Activated naive CD4-positive, alpha-beta T cell treated with anti-CD3 and anti-CD28 coated beads for 36 hours (primary cell): ENCODE measurements at regions of chr18 and their contacts with region 1.

Region 1: GRCh38 chr18:69935319-69936190 is 12.1 kb downstream of the CD226 start:
- DNase-seq: peak; percentile 92
- H3K4me3 Mint-ChIP-seq: no peak overlapping the region
- H3K27ac Mint-ChIP-seq: no peak overlapping the region
- H3K4me1 Mint-ChIP-seq: peaks cover 41% of the 10 kb centered on the region
- H3K27me3 Mint-ChIP-seq: no peaks in the 10 kb centered on the region

Region 2: GRCh38 chr18:68714609-68715496 is 1220.7 kb before region 1 on chr18 and contains the start of gene TMX3:
- CTCF ChIA-PET with region 1: no interaction called
- intact Hi-C with region 1: loop called (anchors 1 kb)
- DNase-seq: peak; percentile 90
- H3K4me3 Mint-ChIP-seq: peak within 1 kb of the TSS; percentile 96
- H3K27ac Mint-ChIP-seq: peak within 1 kb of the TSS; percentile 92
- H3K4me1 Mint-ChIP-seq: peaks cover 33% of the 10 kb centered on the region
- H3K27me3 Mint-ChIP-seq: no peaks in the 10 kb centered on the region
- total RNA-seq, gene TMX3: 35.5 to 41.3 TPM

Region 3: DNA sequence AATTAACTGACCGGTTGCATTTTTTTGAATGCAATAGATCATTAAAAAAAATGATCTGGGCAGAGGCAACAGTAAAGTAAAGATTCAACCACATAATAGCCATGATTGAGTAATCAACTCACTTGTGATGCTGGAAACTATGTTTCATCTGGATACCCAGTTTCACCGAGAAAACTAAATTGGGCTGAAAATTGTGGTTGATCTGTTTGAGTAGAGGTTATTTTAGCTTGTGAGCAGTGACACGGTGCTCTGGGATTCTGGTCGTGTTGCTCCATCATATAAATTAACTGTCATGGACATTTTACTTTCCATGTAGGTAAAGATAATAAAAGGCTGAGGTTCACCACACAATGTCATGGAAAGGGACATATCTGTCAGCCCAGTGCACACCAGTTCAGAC is 46.5 kb before region 1 on chr18:
- CTCF ChIA-PET with region 1: interaction called, 3 read pairs
- intact Hi-C with region 1: loop called (anchors 1 kb)
- DNase-seq: peak; percentile 38
- H3K4me3 Mint-ChIP-seq: no peak overlapping the region
- H3K27ac Mint-ChIP-seq: peak overlapping the region; percentile 12
- H3K4me1 Mint-ChIP-seq: peaks cover 69% of the 10 kb centered on the region
- H3K27me3 Mint-ChIP-seq: no peaks in the 10 kb centered on the region

Region 4: DNA sequence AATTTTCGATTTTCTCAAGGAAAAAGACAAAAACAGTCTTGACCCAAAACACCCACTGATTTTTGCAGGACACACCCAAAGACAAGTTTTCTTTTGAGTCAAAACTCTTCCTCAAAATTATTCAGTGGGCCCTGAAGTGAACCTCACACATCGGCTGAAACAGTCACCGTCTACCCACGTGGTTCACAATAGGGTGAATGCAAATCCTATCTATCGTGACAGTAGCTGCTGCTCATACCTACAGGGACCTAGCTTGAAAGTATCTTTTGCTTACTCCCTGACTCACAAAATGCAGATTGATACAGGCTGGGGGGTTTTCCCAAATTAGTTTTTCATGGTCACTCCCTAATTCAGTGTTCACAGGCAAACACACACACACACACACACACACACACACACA is 22.9 kb after region 1 on chr18:
- CTCF ChIA-PET with region 1: interaction called, 8 read pairs
- intact Hi-C with region 1: loop called (anchors 1 kb)
- DNase-seq: peak; percentile 66
- H3K4me3 Mint-ChIP-seq: peak overlapping the region; percentile 27
- H3K27ac Mint-ChIP-seq: no peak overlapping the region
- H3K4me1 Mint-ChIP-seq: peaks cover 24% of the 10 kb centered on the region
- H3K27me3 Mint-ChIP-seq: no peaks in the 10 kb centered on the region

Region 5: GRCh38 chr18:70205421-70206397 is 270.2 kb after region 1 on chr18 and contains the start of gene RTTN:
- CTCF ChIA-PET with region 1: no interaction called
- intact Hi-C with region 1: loop called (anchors 5 kb)
- DNase-seq: peak; percentile 94
- H3K4me3 Mint-ChIP-seq: peak within 1 kb of the TSS; percentile 97
- H3K27ac Mint-ChIP-seq: peak within 1 kb of the TSS; percentile 98
- H3K4me1 Mint-ChIP-seq: peaks cover 20% of the 10 kb centered on the region
- H3K27me3 Mint-ChIP-seq: peaks cover 2% of the 10 kb centered on the region
- total RNA-seq, gene RTTN: 30.2 to 32.0 TPM

Region 6: DNA sequence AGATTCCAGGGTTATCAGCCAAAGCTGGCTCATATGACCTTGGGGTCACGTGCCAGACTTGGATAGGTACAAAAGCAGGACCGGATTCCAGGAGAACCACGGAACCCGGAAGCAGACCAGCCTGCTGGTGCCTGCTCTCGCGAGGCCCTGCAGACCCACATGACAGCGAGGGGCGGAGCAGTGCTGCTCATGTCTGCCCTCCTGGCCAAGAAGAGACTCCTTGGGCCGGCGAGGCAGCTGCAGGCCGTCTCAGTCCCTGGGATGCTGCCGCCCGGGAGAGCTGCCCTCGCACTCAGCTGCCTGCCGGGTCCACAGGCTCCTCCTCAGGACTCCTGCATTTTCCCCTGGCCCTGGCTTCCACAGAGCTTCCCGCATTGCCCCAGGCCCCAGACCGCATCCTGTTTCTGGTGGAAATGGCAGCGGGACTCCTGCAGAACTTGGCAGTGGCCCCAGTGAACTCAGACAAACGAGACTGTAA is 1092.8 kb after region 1 on chr18:
- CTCF ChIA-PET with region 1: no interaction called
- intact Hi-C with region 1: no loop called
- DNase-seq: no peak
- H3K4me3 Mint-ChIP-seq: no peak overlapping the region
- H3K27ac Mint-ChIP-seq: no peak overlapping the region
- H3K4me1 Mint-ChIP-seq: no peaks in the 10 kb centered on the region
- H3K27me3 Mint-ChIP-seq: no peaks in the 10 kb centered on the region